Mammary epithelial cell (primary cell): ENCODE measurements at regions of chr10 and their contacts with region 1.

Region 1: DNA sequence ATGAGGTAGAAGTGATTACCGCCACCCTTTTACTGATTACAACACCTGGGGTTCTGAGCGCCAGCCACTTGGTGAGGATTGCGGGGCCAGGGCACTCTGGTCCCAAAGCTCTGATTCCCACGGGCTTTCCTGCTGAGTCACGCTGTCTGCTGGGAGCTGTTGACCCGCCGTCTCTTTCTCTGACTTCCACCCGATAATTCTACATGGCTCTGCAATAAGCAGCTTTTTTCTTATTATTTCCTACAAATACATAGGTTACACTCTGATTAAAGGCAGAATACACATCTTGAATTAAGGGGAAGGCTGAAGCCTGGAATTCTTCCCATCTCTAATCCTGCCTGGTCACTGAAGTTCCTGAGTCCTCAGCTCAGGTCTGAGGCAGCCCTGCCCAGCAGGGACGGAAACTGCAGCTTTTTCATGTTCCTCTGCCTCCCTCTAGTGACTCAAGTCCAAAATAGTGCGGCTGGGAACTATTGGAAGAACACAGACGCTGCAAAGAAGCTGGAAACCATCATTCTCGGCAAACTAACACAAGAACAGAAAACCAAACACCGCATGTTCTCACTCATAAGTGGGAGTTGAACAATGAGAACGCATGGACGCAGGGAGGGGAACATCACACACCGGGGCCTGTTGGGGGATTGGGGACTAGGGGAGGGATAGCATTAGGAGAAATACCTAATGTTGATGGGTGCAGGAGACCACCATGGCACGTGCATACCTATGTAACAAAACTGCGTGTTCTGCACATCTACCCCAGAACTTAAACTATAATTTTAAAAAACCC is 178.3 kb downstream of the PRKCQ start:
- DNase-seq: peak; percentile 82
- H3K4me3 ChIP-seq: peak overlapping the region; percentile 31 to 58 (median 39)
- H3K27ac ChIP-seq: peak overlapping the region; percentile 64
- H3K4me1 ChIP-seq: peaks cover 11% of the 10 kb centered on the region
- H3K27me3 ChIP-seq: no peaks in the 10 kb centered on the region
- CTCF ChIP-seq: peak; percentile 65 to 78

Region 2: DNA sequence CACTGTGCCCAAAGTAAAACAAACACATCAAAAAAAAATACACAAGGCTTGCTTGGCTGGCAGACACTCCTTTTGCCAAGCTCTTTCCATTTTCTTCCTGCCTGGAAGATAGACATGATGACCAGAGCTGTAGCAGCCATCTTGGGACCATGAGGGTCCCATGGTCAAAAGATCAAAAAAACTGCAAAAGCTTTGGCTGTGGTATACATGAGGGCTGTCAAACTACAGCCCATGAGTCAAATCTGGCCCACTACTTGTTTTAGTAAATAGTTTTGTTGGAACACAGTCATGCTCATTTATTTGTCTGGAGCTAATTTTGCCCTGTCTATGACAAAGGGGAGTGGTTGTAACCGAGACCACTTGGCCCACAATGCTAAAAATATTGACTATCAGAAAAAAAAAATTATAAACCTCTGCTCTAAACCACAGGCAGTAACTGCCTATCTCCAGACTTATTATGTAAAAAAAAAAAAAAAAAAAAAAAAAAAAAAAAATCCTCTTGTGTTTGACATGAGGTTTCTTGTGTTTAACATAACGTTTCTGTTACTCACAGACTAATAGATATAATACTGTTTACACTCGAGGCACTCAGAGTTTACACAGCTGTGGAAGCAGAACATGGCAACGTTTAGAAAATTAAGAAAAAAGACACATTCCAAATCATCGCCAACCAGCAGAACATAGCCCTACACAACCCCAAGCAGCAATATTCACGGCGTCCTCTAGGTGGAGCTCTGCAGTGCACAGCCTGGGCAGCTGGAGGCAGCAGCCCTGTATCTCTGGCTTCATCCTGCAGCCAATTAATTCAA is 772.2 kb before region 1 on chr10:
- CTCF ChIA-PET with region 1: no interaction called
- dilution Hi-C with region 1: no loop called
- in situ Hi-C with region 1: no loop called
- intact Hi-C with region 1: loop called (anchors 5 kb)
- DNase-seq: peak; percentile 57
- H3K4me3 ChIP-seq: no peak overlapping the region
- H3K27ac ChIP-seq: no peak overlapping the region
- H3K4me1 ChIP-seq: peaks cover 13% of the 10 kb centered on the region
- H3K27me3 ChIP-seq: no peaks in the 10 kb centered on the region
- CTCF ChIP-seq: peak; percentile 94 to 97

Region 3: GRCh38 chr10:6088721-6089390 is 312.9 kb before region 1 on chr10 and contains the start of gene RBM17:
- CTCF ChIA-PET with region 1: interaction called, 5 read pairs
- dilution Hi-C with region 1: no loop called
- in situ Hi-C with region 1: no loop called
- intact Hi-C with region 1: loop called (anchors 1 kb)
- DNase-seq: peak; percentile 89
- H3K4me3 ChIP-seq: peak within 1 kb of the TSS; percentile 74 to 77 (median 76)
- H3K27ac ChIP-seq: peak within 1 kb of the TSS; percentile 82
- H3K4me1 ChIP-seq: peaks cover 15% of the 10 kb centered on the region
- H3K27me3 ChIP-seq: peaks cover 2% of the 10 kb centered on the region
- CTCF ChIP-seq: peak; percentile 100
- total RNA-seq, gene RBM17: 31.5 to 120 TPM

Region 4: GRCh38 chr10:6195846-6196245 is 205.9 kb before region 1 on chr10:
- CTCF ChIA-PET with region 1: interaction called, 11 read pairs
- dilution Hi-C with region 1: no loop called
- in situ Hi-C with region 1: loop called (anchors 5 to 10 kb)
- intact Hi-C with region 1: no loop called
- DNase-seq: no peak
- H3K4me3 ChIP-seq: no peak overlapping the region
- H3K27ac ChIP-seq: no peak overlapping the region
- H3K4me1 ChIP-seq: peaks cover 3% of the 10 kb centered on the region
- H3K27me3 ChIP-seq: no peaks in the 10 kb centered on the region
- CTCF ChIP-seq: no peak

Region 5: DNA sequence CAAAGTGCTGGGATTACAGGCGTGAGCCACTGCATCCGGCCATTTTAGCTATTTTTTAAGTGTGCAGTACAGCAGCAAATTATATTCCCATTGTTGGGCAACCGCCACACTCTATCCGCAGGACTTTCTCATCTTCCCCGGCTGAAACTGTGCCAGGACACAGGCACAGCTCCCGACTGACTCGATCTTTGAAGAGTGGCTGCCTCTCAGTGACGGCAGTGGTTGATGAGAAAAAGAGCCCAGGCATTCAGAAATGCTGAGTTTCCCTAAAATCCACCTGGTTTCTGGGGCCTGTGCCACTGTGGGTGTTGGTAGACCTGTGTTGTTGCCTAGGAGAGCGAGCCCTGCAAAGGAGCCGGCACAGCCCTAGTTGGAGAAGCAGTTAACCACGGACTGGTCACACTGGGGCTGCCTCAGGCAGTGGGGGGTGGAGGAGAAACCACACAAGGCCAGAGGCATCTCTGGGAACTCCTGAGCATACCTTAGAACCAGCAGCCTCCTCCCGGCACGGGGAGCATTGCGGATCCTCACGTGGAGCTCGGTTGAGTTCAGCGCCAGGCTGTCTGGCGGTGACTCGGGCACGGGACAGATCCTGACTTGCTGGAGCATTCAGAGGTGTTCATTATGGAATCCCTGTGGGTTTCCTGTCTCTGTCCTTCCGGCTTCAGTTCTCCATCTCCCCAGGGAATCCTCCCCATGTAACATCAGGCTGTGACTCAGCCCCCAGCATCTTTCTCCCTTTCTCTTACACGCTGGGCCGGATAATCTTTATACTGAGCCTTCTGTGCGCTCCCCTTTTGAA is 182.9 kb before region 1 on chr10:
- CTCF ChIA-PET with region 1: interaction called, 10 read pairs
- dilution Hi-C with region 1: no loop called
- in situ Hi-C with region 1: loop called in 1 of 2 experiments (anchors 10 kb)
- intact Hi-C with region 1: loop called (anchors 5 kb)
- DNase-seq: peak; percentile 100
- H3K4me3 ChIP-seq: no peak overlapping the region
- H3K27ac ChIP-seq: peak overlapping the region; percentile 84
- H3K4me1 ChIP-seq: peaks cover 36% of the 10 kb centered on the region
- H3K27me3 ChIP-seq: no peaks in the 10 kb centered on the region
- CTCF ChIP-seq: no peak

Region 6: GRCh38 chr10:6300106-6300783 is 101.5 kb before region 1 on chr10:
- CTCF ChIA-PET with region 1: no interaction called
- dilution Hi-C with region 1: no loop called
- in situ Hi-C with region 1: no loop called
- intact Hi-C with region 1: loop called (anchors 5 kb)
- DNase-seq: peak; percentile 40
- H3K4me3 ChIP-seq: no peak overlapping the region
- H3K27ac ChIP-seq: no peak overlapping the region
- H3K4me1 ChIP-seq: peaks cover 43% of the 10 kb centered on the region
- H3K27me3 ChIP-seq: no peaks in the 10 kb centered on the region
- CTCF ChIP-seq: no peak

Region 7: DNA sequence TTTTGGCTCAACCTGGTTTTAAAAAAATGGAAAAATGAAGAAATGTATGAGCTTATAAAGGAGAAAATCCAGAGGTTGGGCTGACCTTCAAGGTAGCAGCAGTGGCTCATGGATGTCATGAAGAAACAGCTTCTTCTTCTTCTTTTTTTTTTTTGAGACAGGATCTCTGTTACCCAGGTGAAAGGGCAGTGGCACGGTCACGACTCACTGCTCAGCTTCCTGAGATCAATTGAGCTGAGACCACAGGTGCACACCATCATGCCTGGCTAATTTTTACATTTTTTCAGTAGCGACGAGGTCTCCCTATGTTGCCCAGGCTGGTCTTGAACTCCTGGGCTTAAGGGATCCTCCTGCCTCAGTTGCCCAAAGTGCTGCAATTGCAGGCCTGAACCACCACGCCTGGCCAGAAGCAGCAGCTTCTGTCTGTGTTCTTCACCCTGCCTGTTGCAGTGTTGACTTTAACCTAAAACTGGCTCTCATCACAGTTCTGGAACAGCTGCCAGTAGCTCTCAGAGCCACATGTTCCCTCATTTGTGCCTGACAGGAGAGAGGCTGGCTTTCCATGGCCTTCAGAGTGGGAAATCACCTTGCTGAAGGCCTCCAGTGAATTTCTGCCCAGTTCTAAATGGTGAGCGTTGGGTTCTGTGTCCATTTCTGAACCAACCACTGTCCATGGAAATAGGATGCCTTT is 81.3 kb before region 1 on chr10:
- CTCF ChIA-PET with region 1: no interaction called
- dilution Hi-C with region 1: no loop called
- in situ Hi-C with region 1: no loop called
- intact Hi-C with region 1: no loop called
- DNase-seq: no peak
- H3K4me3 ChIP-seq: no peak overlapping the region
- H3K27ac ChIP-seq: no peak overlapping the region
- H3K4me1 ChIP-seq: no peaks in the 10 kb centered on the region
- H3K27me3 ChIP-seq: no peaks in the 10 kb centered on the region
- CTCF ChIP-seq: no peak

Region 8: DNA sequence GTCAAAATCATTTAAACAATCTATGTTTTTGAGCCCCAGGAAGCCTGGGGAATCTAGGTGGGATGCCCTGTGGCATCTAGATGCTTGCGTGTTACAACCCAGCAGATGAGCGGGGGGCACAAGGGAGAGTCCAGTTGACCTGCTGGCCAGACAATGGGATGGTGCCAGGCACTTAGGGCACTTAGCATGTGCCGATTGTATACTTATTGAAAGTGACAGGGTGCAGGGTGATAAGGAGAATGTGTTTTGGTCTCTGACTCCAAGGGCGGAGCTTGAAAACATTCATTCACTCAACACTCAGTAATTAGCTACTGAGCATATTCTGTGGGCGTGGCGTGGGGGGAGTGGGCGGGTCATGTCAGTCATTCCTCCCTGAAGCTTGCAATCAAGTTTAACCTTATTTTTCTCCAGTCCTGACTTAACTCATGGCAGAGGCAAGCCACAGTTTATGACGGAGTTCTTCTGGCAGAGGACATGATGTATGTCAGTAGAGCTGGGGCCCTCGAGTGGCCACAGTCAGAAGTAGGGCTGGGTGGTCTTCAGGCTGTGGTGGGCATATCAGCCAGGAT is 63.2 kb after region 1 on chr10:
- CTCF ChIA-PET with region 1: no interaction called
- dilution Hi-C with region 1: no loop called
- in situ Hi-C with region 1: no loop called
- intact Hi-C with region 1: no loop called
- DNase-seq: no peak
- H3K4me3 ChIP-seq: no peak overlapping the region
- H3K27ac ChIP-seq: no peak overlapping the region
- H3K4me1 ChIP-seq: no peaks in the 10 kb centered on the region
- H3K27me3 ChIP-seq: no peaks in the 10 kb centered on the region
- CTCF ChIP-seq: no peak

Region 9: DNA sequence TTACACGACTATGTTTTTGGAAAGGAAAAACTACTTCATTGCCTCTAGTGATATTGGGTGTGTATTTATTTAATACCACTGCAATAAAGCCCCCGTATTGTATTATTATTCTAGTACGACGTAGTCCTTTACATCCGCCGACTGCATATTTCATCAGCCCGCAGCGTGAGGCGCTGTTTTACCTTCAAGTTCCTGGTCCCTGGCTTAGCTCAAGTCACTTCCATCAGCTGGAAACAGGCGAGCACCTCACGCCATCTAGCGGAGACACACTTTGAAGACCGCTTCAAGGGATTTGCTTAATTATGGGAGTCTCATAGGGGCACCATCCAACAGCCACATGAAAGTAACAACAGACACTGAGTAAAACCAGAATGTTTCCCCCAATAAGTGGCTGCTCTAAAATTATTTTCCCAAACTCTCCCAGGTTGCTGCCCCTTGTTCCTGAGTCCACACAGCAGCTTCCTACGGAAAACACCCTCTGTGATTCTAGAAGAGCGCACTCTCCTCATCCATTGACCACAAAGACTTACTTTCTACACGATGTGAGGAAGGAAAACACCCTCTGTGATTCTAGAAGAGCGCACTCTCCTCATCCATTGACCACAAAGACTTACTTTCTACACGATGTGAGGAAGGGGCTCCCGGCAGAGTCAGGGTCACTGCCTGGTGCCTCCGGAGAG is 1285.6 kb after region 1 on chr10:
- CTCF ChIA-PET with region 1: no interaction called
- dilution Hi-C with region 1: no loop called
- in situ Hi-C with region 1: loop called in 1 of 2 experiments (anchors 25 kb)
- intact Hi-C with region 1: no loop called
- DNase-seq: peak; percentile 73
- H3K4me3 ChIP-seq: no peak overlapping the region
- H3K27ac ChIP-seq: no peak overlapping the region
- H3K4me1 ChIP-seq: no peaks in the 10 kb centered on the region
- H3K27me3 ChIP-seq: no peaks in the 10 kb centered on the region
- CTCF ChIP-seq: peak; percentile 83 to 91

Region 10: GRCh38 chr10:7750222-7750621 is 1348.5 kb after region 1 on chr10:
- CTCF ChIA-PET with region 1: no interaction called
- dilution Hi-C with region 1: no loop called
- in situ Hi-C with region 1: no loop called
- intact Hi-C with region 1: no loop called
- DNase-seq: no peak
- H3K4me3 ChIP-seq: no peak overlapping the region
- H3K27ac ChIP-seq: no peak overlapping the region
- H3K4me1 ChIP-seq: no peaks in the 10 kb centered on the region
- H3K27me3 ChIP-seq: no peaks in the 10 kb centered on the region
- CTCF ChIP-seq: no peak